Heart right ventricle (tissue), 16 donors: ENCODE measurements at regions of chr11 and their contacts with region 1.

Region 1: DNA sequence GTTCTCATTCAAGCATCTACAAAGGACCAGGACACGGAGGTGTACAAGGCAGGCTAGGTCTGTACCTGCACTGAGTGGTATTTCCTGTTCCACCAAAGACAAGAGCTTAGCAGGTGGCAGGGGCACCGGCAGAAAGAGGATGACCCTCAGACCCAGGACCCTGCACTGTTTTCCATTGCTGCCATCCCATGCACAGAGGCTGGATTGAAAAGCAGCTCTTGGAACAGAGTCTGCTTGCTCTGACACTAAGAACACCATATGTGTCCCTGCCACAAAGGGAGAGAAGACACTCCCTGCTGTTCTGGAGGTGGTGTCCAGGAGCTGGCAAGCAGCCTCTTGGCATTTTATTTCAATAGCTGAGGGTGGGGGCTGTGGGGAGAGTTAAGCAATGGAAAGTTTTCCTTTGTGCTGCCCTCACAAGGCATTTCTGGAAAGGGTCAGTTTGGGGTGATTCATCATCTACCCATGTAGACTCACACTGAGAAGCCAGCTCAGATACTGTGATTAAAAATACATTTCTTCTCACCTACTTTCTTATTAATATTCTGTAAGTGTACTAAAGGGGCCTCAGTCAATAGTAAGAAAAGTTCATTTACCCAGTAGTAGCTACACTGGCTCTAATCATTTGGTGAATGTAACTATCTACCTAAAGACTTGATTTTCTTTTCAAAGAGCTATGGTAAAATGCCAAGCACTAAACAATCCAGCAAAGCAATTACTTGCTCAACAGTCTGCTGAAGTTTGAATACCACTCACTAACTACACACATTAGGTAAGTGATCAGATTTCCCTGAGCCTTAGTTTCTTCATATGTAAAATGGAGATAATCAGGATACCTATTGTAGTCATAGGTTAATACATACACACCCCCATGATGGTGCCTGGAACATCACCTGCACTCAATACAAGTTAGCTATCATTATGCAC is 55.2 kb downstream of the SLC1A2 start:
- DNase-seq: peak; percentile 36 to 70
- ATAC-seq: peak; percentile 40 to 92 (median 77)
- H3K4me3 ChIP-seq: no peak overlapping the region
- H3K27ac ChIP-seq: peak overlapping the region in 9 of 10 donors; percentile 41 to 87 (median 64)
- H3K4me1 ChIP-seq: peaks cover 3 to 61% (median 42%) of the 10 kb centered on the region in 9 donors
- H3K27me3 ChIP-seq: no peaks in the 10 kb centered on the region
- CTCF ChIP-seq: no peak

Region 2: GRCh38 chr11:35246745-35247144 is 117.4 kb before region 1 on chr11:
- intact Hi-C with region 1: loop called in 2 of 10 experiments (anchors 5 to 10 kb)
- DNase-seq: peak in 1 of 2 donors; percentile 60
- ATAC-seq: peak; percentile 55 to 96 (median 92)
- H3K4me3 ChIP-seq: no peak overlapping the region
- H3K27ac ChIP-seq: peak overlapping the region; percentile 8 to 88 (median 72)
- H3K4me1 ChIP-seq: peaks cover 0 to 34% (median 10%) of the 10 kb centered on the region in 9 donors
- H3K27me3 ChIP-seq: no peaks in the 10 kb centered on the region
- CTCF ChIP-seq: no peak

Region 3: GRCh38 chr11:35404388-35404775 is 40.3 kb after region 1 on chr11:
- intact Hi-C with region 1: no loop called
- DNase-seq: peak in 1 of 2 donors; percentile 20
- ATAC-seq: peak in 2 of 8 donors; percentile 40 to 42
- H3K4me3 ChIP-seq: no peak overlapping the region
- H3K27ac ChIP-seq: no peak overlapping the region
- H3K4me1 ChIP-seq: peaks cover 0 to 4% (median 0%) of the 10 kb centered on the region in 9 donors
- H3K27me3 ChIP-seq: peaks cover 0 to 17% (median 4%) of the 10 kb centered on the region in 7 donors
- CTCF ChIP-seq: peak in 7 of 9 donors; percentile 42 to 54 (median 47)